Heart left ventricle (tissue), 16 donors: ENCODE measurements at regions of chr4 and their contacts with region 1.

Region 1: GRCh38 chr4:114087596-114088230 is 108.3 kb upstream of the ARSJ start:
- DNase-seq: no peak
- ATAC-seq: no peak
- H3K4me3 ChIP-seq: no peak overlapping the region
- H3K27ac ChIP-seq: no peak overlapping the region
- H3K4me1 ChIP-seq: no peaks in the 10 kb centered on the region
- H3K27me3 ChIP-seq: no peaks in the 10 kb centered on the region
- CTCF ChIP-seq: no peak
- POLR2A ChIP-seq: no peak

Region 2: DNA sequence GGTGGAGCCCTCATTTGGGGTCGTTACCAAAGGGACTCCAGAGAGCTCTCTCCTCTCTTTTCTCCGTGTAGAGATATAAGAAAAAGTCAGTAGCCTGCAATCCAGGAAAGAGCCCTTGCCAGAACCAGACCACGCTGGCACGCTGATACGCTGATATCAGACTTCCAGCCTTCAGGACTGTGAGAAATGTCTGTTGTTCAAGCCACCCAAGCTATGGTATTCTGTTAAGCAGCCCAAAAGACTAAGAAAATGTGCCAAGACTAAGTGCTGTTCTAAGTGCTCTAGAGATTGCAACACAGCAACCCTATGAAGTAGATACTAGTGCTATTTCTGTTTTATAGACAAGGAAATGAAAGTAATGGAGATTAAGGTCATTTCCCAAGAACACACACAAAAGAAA is 531.8 kb before region 1 on chr4:
- intact Hi-C with region 1: no loop called
- DNase-seq: peak in 4 of 5 donors; percentile 25 to 68 (median 50)
- ATAC-seq: peak; percentile 83 to 96 (median 90)
- H3K4me3 ChIP-seq: peak overlapping the region in 4 of 12 donors; percentile 7 to 15 (median 10)
- H3K27ac ChIP-seq: peak overlapping the region; percentile 64 to 92 (median 81)
- H3K4me1 ChIP-seq: peaks cover 0 to 39% (median 24%) of the 10 kb centered on the region in 12 donors
- H3K27me3 ChIP-seq: no peaks in the 10 kb centered on the region
- CTCF ChIP-seq: no peak
- POLR2A ChIP-seq: no peak

Region 3: DNA sequence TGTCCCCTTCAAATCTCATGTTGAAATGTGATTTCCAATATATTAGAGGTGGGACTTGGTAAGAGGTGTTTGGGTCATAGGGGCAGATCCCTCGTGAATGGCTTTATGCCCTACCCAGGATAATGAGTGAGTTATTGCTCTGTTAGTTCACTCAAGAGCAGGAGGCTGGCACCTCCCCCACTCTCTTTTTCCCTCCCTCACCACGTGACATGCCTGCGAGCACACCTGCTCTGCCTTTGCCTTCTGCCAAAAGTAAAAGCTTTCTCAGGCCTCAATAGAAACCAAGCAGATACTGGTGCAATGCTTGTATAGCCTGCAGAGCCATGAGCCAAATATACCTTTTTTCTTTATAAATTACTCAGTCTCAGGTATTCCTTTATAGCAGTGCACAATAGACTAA is 224.6 kb after region 1 on chr4:
- intact Hi-C with region 1: loop called in 1 of 10 experiments (anchors 5 kb)
- DNase-seq: no peak
- ATAC-seq: no peak
- H3K4me3 ChIP-seq: no peak overlapping the region
- H3K27ac ChIP-seq: no peak overlapping the region
- H3K4me1 ChIP-seq: no peaks in the 10 kb centered on the region
- H3K27me3 ChIP-seq: no peaks in the 10 kb centered on the region
- CTCF ChIP-seq: no peak
- POLR2A ChIP-seq: no peak